HEK293 (cell line): ENCODE measurements at regions of chrX and their contacts with region 1.

Region 1: GRCh38 chrX:74015379-74016019 is 288.5 kb upstream of the ZCCHC13 start:
- H3K4me3 ChIP-seq: no peak overlapping the region
- H3K27ac ChIP-seq: no peak overlapping the region
- H3K4me1 ChIP-seq: no peaks in the 10 kb centered on the region
- CTCF ChIP-seq: peak; percentile 93

Region 2: DNA sequence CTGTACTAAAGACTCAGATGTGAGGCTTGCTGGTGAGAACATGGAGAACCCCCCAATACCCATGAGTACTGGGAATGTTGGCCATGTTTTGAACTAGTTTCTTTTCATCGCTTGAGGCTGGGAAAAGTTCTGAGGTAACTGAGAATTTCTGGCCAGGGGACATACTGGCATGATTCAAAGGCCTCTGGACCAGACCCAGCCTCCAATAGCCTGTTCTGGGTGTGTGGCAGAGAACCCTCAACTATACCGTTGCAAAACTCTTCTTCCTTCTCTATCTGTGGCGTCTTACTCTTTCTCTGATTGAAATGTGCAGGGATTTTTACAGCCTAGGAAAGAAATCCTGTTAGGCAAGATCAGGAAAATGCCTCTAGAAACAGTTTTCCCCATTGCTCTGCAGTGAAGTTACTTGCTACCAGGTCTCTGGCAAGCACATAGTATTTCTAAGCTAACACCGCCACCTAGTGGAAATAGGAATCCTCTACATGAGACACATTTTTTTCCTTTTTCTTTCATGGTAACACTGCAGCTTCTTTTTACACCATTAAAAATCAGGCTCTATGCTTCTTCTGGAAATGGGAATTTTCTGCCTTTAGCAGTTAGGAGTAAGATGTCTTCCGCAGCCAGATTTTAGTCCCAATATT is 117.8 kb after region 1 on chrX:
- CTCF ChIA-PET with region 1: interaction called, 22 read pairs
- POLR2A ChIA-PET with region 1: no interaction called
- H3K4me3 ChIP-seq: no peak overlapping the region
- H3K27ac ChIP-seq: no peak overlapping the region
- H3K4me1 ChIP-seq: no peaks in the 10 kb centered on the region
- CTCF ChIP-seq: peak; percentile 86